Transverse colon (tissue), 4 donors: ENCODE measurements at regions of chr6 and their contacts with region 1.

Region 1: GRCh38 chr6:55941702-55942101 is 66.3 kb upstream of the BMP5 start:
- DNase-seq: no peak
- H3K4me3 ChIP-seq: no peak overlapping the region
- H3K27ac ChIP-seq: no peak overlapping the region
- H3K4me1 ChIP-seq: no peaks in the 10 kb centered on the region
- H3K27me3 ChIP-seq: no peaks in the 10 kb centered on the region
- CTCF ChIP-seq: no peak
- EP300 ChIP-seq: no peak
- POLR2A ChIP-seq: no peak

Region 2: DNA sequence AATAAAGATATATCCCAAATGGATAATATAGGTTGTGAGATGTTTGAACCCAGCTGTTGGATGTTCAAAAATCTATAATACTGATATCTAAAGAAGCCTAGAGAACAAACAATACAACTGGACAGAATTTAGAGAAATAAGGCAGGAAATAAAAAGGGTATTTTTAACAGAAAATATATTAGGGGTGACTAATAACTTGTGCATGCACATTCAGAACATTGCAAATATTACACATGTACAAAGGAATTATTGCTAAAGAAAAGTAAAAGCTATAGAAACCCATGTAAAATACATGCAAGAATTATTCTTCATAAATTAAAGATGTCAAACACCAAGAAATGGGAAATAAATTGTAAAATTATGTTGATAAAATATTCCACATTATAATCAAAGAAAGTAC is 800.1 kb before region 1 on chr6:
- in situ Hi-C with region 1: no loop called
- intact Hi-C with region 1: loop called (anchors 5 kb)
- DNase-seq: no peak
- H3K4me3 ChIP-seq: no peak overlapping the region
- H3K27ac ChIP-seq: no peak overlapping the region
- H3K4me1 ChIP-seq: no peaks in the 10 kb centered on the region
- H3K27me3 ChIP-seq: no peaks in the 10 kb centered on the region
- CTCF ChIP-seq: no peak
- EP300 ChIP-seq: no peak
- POLR2A ChIP-seq: no peak